Endothelial cell of umbilical vein (primary cell): ENCODE measurements at regions of chr1 and their contacts with region 1.

Region 1: GRCh38 chr1:100883963-100884362 is 10.7 kb downstream of the EXTL2 start:
- DNase-seq: peak; percentile 76
- H3K4me3 ChIP-seq: no peak overlapping the region
- H3K27ac ChIP-seq: no peak overlapping the region
- H3K4me1 ChIP-seq: peaks cover 14% of the 10 kb centered on the region
- H3K27me3 ChIP-seq: no peaks in the 10 kb centered on the region
- CTCF ChIP-seq: peak in 1 of 2 donors; percentile 5
- POLR2A ChIP-seq: no peak

Region 2: DNA sequence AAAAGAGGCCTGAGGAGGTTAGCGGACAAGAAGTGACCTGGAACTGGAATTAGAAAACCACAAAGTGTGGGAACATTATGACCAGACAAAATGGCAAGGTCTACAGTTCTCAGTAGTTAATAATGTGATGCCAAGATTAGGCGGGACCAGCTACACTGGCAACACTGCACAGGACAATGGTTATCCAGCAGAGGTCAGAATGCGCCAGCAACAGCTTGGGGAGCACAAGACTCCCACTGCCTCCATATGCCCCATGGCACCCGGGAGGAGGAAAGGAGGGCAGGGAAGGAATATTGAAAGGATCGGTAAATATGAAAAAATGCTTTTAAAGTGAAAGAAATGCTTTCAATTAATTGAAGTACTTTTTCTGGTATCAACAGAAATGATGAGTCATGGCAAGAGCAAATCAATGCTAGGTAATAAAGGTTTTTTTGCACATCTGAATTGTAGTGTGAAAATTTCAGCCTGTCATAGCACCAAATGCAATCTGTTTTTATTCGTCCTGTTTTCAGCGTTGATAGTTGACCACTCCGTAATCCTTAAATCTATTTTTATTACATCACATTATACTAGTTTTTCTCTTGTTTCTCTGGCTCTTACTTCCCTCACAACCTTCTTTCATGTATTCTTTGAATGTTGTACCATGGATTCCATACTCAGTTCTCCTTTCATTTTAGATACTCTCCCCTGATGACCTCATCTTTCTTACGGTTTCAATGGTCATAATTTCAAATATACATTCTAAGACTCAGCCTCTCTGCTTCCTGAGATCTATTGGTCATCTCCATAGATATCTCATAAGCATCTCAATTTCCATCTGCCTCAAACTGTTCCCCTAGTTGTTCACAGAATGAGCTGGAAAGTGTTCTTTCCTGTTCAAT is 133.7 kb before region 1 on chr1:
- CTCF ChIA-PET with region 1: no interaction called
- POLR2A ChIA-PET with region 1: no interaction called
- dilution Hi-C with region 1: no loop called
- intact Hi-C with region 1: no loop called
- DNase-seq: no peak
- H3K4me3 ChIP-seq: no peak overlapping the region
- H3K27ac ChIP-seq: no peak overlapping the region
- H3K4me1 ChIP-seq: no peaks in the 10 kb centered on the region
- H3K27me3 ChIP-seq: no peaks in the 10 kb centered on the region
- CTCF ChIP-seq: no peak
- POLR2A ChIP-seq: no peak

Region 3: GRCh38 chr1:100895540-100896483 is 11.8 kb after region 1 on chr1 and contains the start of gene SLC30A7:
- CTCF ChIA-PET with region 1: interaction called, 23 read pairs
- POLR2A ChIA-PET with region 1: no interaction called
- dilution Hi-C with region 1: no loop called
- intact Hi-C with region 1: no loop called
- DNase-seq: peak; percentile 90
- H3K4me3 ChIP-seq: peak within 1 kb of the TSS; percentile 87 to 91 (median 91)
- H3K27ac ChIP-seq: peak within 1 kb of the TSS; percentile 93
- H3K4me1 ChIP-seq: peaks cover 26% of the 10 kb centered on the region
- H3K27me3 ChIP-seq: no peaks in the 10 kb centered on the region
- CTCF ChIP-seq: no peak
- POLR2A ChIP-seq: peak; percentile 87
- total RNA-seq, gene SLC30A7: 38.6 and 39.0 TPM in 2 replicates

Region 4: GRCh38 chr1:101207891-101208290 is 323.9 kb after region 1 on chr1:
- CTCF ChIA-PET with region 1: no interaction called
- POLR2A ChIA-PET with region 1: no interaction called
- dilution Hi-C with region 1: no loop called
- intact Hi-C with region 1: no loop called
- DNase-seq: no peak
- H3K4me3 ChIP-seq: no peak overlapping the region
- H3K27ac ChIP-seq: no peak overlapping the region
- H3K4me1 ChIP-seq: no peaks in the 10 kb centered on the region
- H3K27me3 ChIP-seq: no peaks in the 10 kb centered on the region
- CTCF ChIP-seq: no peak
- POLR2A ChIP-seq: no peak